BJ (cell line): ENCODE measurements at regions of chr9 and their contacts with region 1.

Region 1: GRCh38 chr9:68999393-69000105 is 14.4 kb downstream of the PRKACG start:
- DNase-seq: peak; percentile 8
- H3K4me3 ChIP-seq: no peak overlapping the region
- H3K27me3 ChIP-seq: peaks cover 4% of the 10 kb centered on the region; the same call in 1 of the 2 replicates
- CTCF ChIP-seq: peak; percentile 87

Region 2: GRCh38 chr9:68584189-68585033 is 415.1 kb before region 1 on chr9:
- CTCF ChIA-PET with region 1: interaction called, 13 read pairs
- POLR2A ChIA-PET with region 1: no interaction called
- DNase-seq: peak; percentile 16
- H3K4me3 ChIP-seq: no peak overlapping the region
- H3K27me3 ChIP-seq: no peaks in the 10 kb centered on the region
- CTCF ChIP-seq: peak; percentile 100